Left ventricle myocardium inferior (tissue), 1 donor: ENCODE measurements at regions of chr7 and their contacts with region 1.

Region 1: GRCh38 chr7:46454816-46455215 is 533.7 kb upstream of the IGFBP3 start:
- DNase-seq: peak; percentile 18
- H3K4me3 ChIP-seq: no peak overlapping the region
- H3K27ac ChIP-seq: no peak overlapping the region
- H3K4me1 ChIP-seq: peaks cover 6% of the 10 kb centered on the region
- H3K27me3 ChIP-seq: no peaks in the 10 kb centered on the region
- CTCF ChIP-seq: no peak

Region 2: DNA sequence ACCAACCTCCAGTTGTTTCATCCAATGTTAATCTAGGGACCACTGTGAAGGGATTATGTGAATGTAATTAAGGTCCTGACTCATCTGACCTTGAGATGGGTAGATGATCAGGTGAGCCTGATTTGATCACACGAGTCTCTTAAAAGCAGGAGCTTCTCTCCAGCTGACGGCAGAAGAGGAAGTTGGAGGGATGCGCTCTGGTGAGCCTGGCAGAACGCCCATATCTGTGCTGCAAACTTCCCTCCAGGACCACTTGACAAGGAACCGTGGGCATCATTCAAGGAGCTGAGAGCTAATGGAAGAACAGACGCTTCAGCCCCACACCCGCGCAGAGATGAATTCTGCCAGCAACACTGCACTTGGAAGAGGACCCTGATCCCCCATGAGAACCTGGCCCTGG is 484.7 kb after region 1 on chr7:
- intact Hi-C with region 1: loop called (anchors 5 kb)
- DNase-seq: no peak
- H3K4me3 ChIP-seq: no peak overlapping the region
- H3K27ac ChIP-seq: no peak overlapping the region
- H3K4me1 ChIP-seq: peaks cover 22% of the 10 kb centered on the region
- H3K27me3 ChIP-seq: no peaks in the 10 kb centered on the region
- CTCF ChIP-seq: no peak